GM12878 (cell line): ENCODE measurements at regions of chr2 and their contacts with region 1.

Region 1: DNA sequence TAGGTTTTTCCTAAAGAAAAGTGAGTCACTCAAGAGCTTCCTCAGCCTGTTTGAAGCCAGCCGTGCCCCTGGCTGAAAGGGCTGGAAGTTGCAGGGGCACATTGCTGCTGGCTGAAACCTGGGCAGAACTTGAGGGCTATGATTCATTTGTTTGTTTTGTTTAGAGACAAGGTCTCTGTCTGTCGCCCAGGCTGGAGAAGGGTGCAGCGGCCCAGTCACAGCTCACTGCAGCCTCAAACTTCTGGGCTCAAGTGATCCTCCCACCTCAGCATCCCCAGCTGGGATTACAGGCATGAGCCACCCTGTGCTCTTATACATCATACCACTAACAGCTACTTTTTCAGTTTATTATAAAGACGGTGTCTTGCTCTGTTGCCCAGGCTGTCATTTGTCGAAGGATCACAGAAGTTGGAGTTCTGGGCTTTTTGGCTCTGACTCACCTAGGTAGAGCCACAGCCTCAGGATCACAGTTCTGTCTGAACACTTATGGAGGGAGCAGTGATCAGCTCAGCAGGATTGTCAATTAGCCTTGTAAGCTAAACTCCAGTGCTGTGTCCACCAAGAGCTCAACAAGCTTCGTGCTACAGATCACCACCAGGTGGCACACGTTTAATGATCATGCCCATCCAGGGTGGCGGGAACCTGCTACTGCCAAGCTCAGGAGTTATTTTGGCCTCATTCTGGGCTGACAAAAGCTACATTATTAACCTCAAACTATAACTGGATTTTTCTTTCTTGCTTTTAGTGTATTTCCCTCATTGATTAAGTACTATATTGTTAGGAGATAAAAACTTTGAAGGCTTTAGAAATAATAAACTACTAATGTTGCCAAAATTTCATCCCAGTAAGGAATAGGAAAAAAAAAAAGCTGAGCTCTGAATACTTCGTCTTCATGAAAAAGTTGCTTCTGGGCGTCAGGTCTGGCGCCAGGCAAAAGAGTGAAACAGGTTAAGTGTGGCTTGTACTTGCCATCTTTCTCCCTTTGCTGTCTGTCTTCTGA is 57.9 kb downstream of the ARHGEF33 start:
- DNase-seq: peak; percentile 16
- ATAC-seq: peak; percentile 98
- H3K4me3 ChIP-seq: no peak overlapping the region
- H3K27ac ChIP-seq: no peak overlapping the region
- H3K4me1 ChIP-seq: no peaks in the 10 kb centered on the region
- H3K27me3 ChIP-seq: no peaks in the 10 kb centered on the region
- CTCF ChIP-seq: peak; percentile 72 to 77 (median 74)
- EP300 ChIP-seq: no peak
- POLR2A ChIP-seq: no peak
- RAD21 ChIP-seq: peak; percentile 74

Region 2: DNA sequence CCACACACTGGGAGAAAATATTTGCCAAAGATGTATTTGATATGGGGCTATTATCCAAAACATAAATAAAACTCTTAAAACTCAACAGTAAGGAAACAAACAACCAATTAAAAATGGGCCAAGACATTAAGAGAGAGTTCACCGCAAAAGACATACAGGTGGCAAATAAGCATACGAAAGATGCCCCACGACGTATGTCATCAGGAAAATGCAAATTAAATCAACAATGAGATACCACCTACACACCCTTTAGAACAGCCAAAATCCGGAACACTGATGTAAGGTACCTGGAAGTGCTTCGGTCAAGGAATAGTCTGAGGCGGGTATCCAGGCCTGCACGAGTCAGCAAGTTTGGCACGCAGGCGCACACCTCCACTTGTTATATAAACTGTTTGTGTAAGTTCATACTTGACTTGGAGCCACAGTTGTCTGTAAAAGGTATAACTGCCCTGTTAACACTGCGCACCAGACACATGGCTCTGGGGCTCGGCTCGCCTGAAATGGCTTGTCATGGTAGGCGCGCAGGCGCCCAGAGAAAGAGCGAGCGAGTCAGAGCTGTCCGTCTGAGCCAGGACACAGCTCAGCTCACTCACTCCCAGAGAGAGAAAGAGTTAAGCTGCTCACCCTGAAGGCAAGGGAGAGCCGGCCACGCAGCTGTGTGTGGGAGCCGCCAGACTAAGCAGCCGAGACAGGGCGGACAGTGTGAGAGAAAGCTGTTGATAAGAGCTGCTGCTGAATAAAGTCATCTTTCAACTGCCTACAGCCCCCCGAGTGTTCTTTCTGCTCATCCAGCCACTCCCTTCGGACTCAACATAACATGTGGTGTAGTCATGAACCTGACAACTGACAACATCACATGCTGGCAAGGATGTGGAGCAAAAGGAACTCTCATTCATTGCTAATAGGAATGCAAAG is 432.1 kb before region 1 on chr2:
- CTCF ChIA-PET with region 1: no interaction called
- POLR2A ChIA-PET with region 1: no interaction called
- RAD21 ChIA-PET with region 1: no interaction called
- SMC1A ChIA-PET with region 1: no interaction called
- in situ Hi-C with region 1: no loop called
- intact Hi-C with region 1: no loop called
- DNase-seq: no peak
- ATAC-seq: no peak
- H3K4me3 ChIP-seq: no peak overlapping the region
- H3K27ac ChIP-seq: no peak overlapping the region
- H3K4me1 ChIP-seq: no peaks in the 10 kb centered on the region
- H3K27me3 ChIP-seq: no peaks in the 10 kb centered on the region
- CTCF ChIP-seq: no peak
- EP300 ChIP-seq: no peak
- POLR2A ChIP-seq: no peak
- RAD21 ChIP-seq: no peak

Region 3: GRCh38 chr2:38935568-38936172 is 11.9 kb before region 1 on chr2:
- CTCF ChIA-PET with region 1: interaction called, 12 read pairs
- POLR2A ChIA-PET with region 1: no interaction called
- RAD21 ChIA-PET with region 1: interaction called, 4 read pairs
- SMC1A ChIA-PET with region 1: interaction called, 10 read pairs
- in situ Hi-C with region 1: no loop called
- intact Hi-C with region 1: no loop called
- DNase-seq: no peak
- ATAC-seq: no peak
- H3K4me3 ChIP-seq: no peak overlapping the region
- H3K27ac ChIP-seq: no peak overlapping the region
- H3K4me1 ChIP-seq: no peaks in the 10 kb centered on the region
- H3K27me3 ChIP-seq: no peaks in the 10 kb centered on the region; a peak in 1 of 4 replicates
- CTCF ChIP-seq: no peak
- EP300 ChIP-seq: no peak
- POLR2A ChIP-seq: no peak
- RAD21 ChIP-seq: no peak

Region 4: GRCh38 chr2:38975042-38975441 is 27.5 kb after region 1 on chr2:
- CTCF ChIA-PET with region 1: interaction called, 13 read pairs
- POLR2A ChIA-PET with region 1: no interaction called
- RAD21 ChIA-PET with region 1: no interaction called
- SMC1A ChIA-PET with region 1: no interaction called
- in situ Hi-C with region 1: no loop called
- intact Hi-C with region 1: no loop called
- DNase-seq: no peak
- ATAC-seq: no peak
- H3K4me3 ChIP-seq: no peak overlapping the region
- H3K27ac ChIP-seq: no peak overlapping the region
- H3K4me1 ChIP-seq: no peaks in the 10 kb centered on the region
- H3K27me3 ChIP-seq: no peaks in the 10 kb centered on the region
- CTCF ChIP-seq: no peak
- EP300 ChIP-seq: no peak
- POLR2A ChIP-seq: no peak
- RAD21 ChIP-seq: no peak

Region 5: DNA sequence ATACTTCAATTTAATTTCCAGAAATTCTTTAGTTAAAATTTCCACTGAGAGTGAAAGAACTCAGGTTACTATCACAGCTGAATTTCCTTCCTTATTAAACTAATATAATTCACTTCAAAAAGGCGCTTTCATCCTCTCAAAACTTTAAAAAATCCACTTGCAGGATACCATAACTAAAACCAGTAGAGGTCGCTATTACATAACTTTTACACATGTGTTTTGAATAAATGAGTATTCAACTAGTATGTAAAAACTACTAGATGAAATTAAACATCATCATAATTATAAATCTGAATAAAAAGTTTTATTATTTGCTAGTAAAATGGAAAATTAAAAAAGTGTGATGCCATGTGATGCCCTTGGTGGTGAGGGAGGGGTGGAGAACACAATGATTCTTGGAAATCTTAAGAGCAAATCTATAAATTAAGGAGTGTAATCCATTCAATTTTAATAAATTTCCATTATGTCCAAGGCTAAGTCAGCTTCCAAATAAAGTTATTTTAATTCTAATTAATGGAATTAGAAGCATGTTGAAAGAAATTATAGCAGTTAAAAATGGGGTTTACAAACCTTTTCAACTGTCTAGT is 111.9 kb after region 1 on chr2:
- CTCF ChIA-PET with region 1: interaction called, 57 read pairs
- POLR2A ChIA-PET with region 1: no interaction called
- RAD21 ChIA-PET with region 1: interaction called, 12 read pairs
- SMC1A ChIA-PET with region 1: interaction called, 13 read pairs
- in situ Hi-C with region 1: no loop called
- intact Hi-C with region 1: loop called (anchors 5 kb)
- DNase-seq: no peak
- ATAC-seq: peak; percentile 73
- H3K4me3 ChIP-seq: no peak overlapping the region
- H3K27ac ChIP-seq: no peak overlapping the region
- H3K4me1 ChIP-seq: no peaks in the 10 kb centered on the region
- H3K27me3 ChIP-seq: no peaks in the 10 kb centered on the region
- CTCF ChIP-seq: peak; percentile 44 to 68 (median 54); a peak in 5 of 6 replicates
- EP300 ChIP-seq: no peak
- POLR2A ChIP-seq: no peak
- RAD21 ChIP-seq: peak; percentile 74